A549 (cell line): ENCODE measurements at regions of chr11 and their contacts with region 1.

Region 1: GRCh38 chr11:13343931-13344717 is 66.5 kb downstream of the BMAL1 start:
- DNase-seq: peak; percentile 74 to 80
- ATAC-seq: peak; percentile 44 to 68
- H3K4me3 ChIP-seq: no peak overlapping the region
- H3K27ac ChIP-seq: peak overlapping the region; percentile 39 to 98
- H3K4me1 ChIP-seq: peaks cover 48% of the 10 kb centered on the region
- CTCF ChIP-seq: peak; percentile 91
- EP300 ChIP-seq: no peak
- POLR2A ChIP-seq: no peak
- RAD21 ChIP-seq: peak; percentile 92 to 95

Region 2: GRCh38 chr11:13249996-13250395 is 94.1 kb before region 1 on chr11:
- CTCF ChIA-PET with region 1: interaction called, 33 read pairs
- POLR2A ChIA-PET with region 1: no interaction called
- DNase-seq: peak in 1 of 2 experiments; percentile 27
- ATAC-seq: peak; percentile 75 to 82
- H3K4me3 ChIP-seq: no peak overlapping the region
- H3K27ac ChIP-seq: no peak overlapping the region
- H3K4me1 ChIP-seq: peaks cover 6% of the 10 kb centered on the region
- CTCF ChIP-seq: peak; percentile 52
- EP300 ChIP-seq: no peak
- POLR2A ChIP-seq: no peak
- RAD21 ChIP-seq: peak; percentile 66 to 70

Region 3: GRCh38 chr11:13276832-13277767 is 67.0 kb before region 1 on chr11:
- CTCF ChIA-PET with region 1: interaction called, 10 read pairs
- POLR2A ChIA-PET with region 1: interaction called, 4 read pairs
- DNase-seq: peak; percentile 98 to 99
- ATAC-seq: peak; percentile 93 to 99
- H3K4me3 ChIP-seq: peak overlapping the region; percentile 96
- H3K27ac ChIP-seq: peak overlapping the region; percentile 83 to 93
- H3K4me1 ChIP-seq: peaks cover 24% of the 10 kb centered on the region; the same call in 2 of the 3 replicates
- CTCF ChIP-seq: no peak
- EP300 ChIP-seq: no peak
- POLR2A ChIP-seq: peak; percentile 70
- RAD21 ChIP-seq: no peak

Region 4: DNA sequence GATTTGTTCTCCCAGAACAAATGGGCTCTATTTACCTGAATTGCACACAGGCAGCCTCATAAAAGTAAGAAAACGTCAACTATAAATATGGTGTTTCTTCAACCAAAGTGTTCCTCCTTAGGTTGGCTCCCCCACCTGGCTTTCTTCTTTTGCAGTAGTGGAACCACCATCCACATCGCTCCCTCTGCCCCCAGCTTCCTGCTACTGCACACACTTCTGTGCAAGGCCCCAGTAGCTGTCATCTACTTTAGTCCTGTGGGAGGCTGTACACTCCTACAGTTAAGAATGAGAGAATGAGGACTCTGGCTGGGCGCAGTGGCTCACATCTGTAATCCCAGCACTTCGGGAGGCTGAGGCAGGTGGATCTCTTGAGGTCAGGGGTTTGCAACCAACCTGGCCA is 23.0 kb after region 1 on chr11:
- CTCF ChIA-PET with region 1: interaction called, 19 read pairs
- POLR2A ChIA-PET with region 1: no interaction called
- DNase-seq: peak in 1 of 2 experiments; percentile 8
- ATAC-seq: peak; percentile 54 to 58; a peak in 3 of 6 replicates
- H3K4me3 ChIP-seq: no peak overlapping the region
- H3K27ac ChIP-seq: no peak overlapping the region
- H3K4me1 ChIP-seq: peaks cover 6% of the 10 kb centered on the region; the same call in 1 of the 3 replicates
- CTCF ChIP-seq: no peak
- EP300 ChIP-seq: no peak
- POLR2A ChIP-seq: no peak
- RAD21 ChIP-seq: no peak